Activated T-helper 1 cell treated with anti-CD3 and anti-CD28 coated beads, Interleukin-12 subunit alpha, Interleukin-12 subunit beta, Interleukin-2, Interleukin-4 antibody, amounts not matched to agents 30 ng/mL and 10 ng/mL and 1 ng/mL, durations not matched to agents 14 hours and 24 hours and 36 hours (primary cell): ENCODE measurements at regions of chr12 and their contacts with region 1.

Region 1: DNA sequence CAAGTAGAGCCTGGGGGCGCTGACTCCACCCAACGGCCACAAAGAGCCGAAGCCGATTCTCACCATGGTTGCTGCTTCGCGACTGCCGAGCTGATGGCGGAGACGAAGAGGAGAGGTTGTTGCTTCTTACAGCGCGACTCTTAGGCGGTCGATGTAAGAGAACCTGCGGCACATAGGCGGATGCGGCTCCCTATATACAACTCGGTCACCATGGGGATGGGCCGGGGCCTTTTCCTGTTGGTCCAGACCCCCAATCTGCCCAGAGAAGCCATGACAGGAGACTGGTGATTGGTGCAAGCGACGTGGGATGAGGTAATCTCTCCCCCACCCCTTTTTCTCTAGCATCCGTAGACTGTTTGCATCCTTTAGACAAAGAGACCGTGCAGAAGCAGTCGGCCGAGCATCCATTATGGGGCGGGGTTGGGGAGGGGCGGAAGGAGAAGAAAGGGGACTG is at the start of gene TUBA1A:
- DNase-seq: peak; percentile 94
- H3K4me3 Mint-ChIP-seq: peak within 1 kb of the TSS; percentile 90
- H3K27ac Mint-ChIP-seq: peak within 1 kb of the TSS; percentile 95
- H3K4me1 Mint-ChIP-seq: peaks cover 15% of the 10 kb centered on the region
- H3K27me3 Mint-ChIP-seq: peaks cover 2% of the 10 kb centered on the region
- total RNA-seq, gene TUBA1A: 46.7 and 47.2 TPM in 2 replicates

Region 2: DNA sequence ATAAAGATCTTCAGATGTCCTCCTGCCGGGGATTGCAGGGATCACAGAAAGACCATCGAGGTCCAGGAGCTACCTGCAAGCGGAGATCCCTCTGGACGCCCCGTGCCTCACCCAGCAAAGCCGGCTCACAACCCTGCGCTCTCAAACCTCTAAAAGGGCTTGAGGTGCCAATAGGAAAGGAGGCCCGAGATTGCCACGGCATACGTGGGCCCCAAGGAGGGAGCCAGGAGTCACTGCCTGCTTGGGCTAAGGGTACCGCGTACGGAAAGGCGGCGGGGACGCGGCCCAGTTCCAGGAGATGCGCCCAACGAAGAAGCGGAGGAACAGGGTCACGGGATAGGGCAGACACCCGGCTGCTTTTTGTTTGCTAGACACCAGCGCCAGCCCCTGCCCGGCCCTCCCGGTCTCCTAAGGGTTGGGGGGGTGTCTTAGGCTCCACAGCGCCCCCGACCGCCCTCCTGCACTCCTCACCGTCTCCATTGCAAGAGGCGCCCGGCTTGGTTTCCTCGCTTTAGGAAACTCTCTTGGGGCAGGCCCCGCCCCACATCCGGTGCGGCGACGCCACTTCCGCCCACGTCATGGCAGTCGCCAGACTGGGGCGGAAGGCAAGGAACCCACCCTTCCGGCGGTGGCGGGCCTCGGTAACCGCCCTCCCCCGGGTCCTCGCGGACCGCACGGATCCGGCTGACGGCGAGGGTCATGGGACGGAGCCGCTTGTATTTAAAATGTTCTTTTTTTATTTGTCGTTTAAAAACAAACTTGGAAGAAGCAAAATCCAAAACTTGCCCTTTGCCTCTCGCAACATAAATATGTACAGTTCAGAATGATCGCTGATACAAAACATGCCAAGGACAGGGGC is 170.5 kb before region 1 on chr12 and contains the start of gene PRKAG1:
- intact Hi-C with region 1: no loop called
- DNase-seq: peak; percentile 97
- H3K4me3 Mint-ChIP-seq: peak within 1 kb of the TSS; percentile 88
- H3K27ac Mint-ChIP-seq: peak within 1 kb of the TSS; percentile 95
- H3K4me1 Mint-ChIP-seq: peaks cover 53% of the 10 kb centered on the region
- H3K27me3 Mint-ChIP-seq: no peaks in the 10 kb centered on the region
- total RNA-seq, gene PRKAG1: 85.0 and 85.1 TPM in 2 replicates

Region 3: GRCh38 chr12:49060237-49061156 is 128.4 kb before region 1 on chr12 and contains the start of gene KMT2D:
- intact Hi-C with region 1: loop called (anchors 2 kb)
- DNase-seq: peak; percentile 83
- H3K4me3 Mint-ChIP-seq: peak within 1 kb of the TSS; percentile 95
- H3K27ac Mint-ChIP-seq: peak within 1 kb of the TSS; percentile 95
- H3K4me1 Mint-ChIP-seq: peaks cover 48% of the 10 kb centered on the region
- H3K27me3 Mint-ChIP-seq: no peaks in the 10 kb centered on the region
- total RNA-seq, gene KMT2D: 107 and 109 TPM in 2 replicates

Region 4: GRCh38 chr12:49110464-49111155 is 78.3 kb before region 1 on chr12 and contains the start of gene LMBR1L:
- intact Hi-C with region 1: loop called (anchors 1 kb)
- DNase-seq: peak; percentile 93
- H3K4me3 Mint-ChIP-seq: peak within 1 kb of the TSS; percentile 93
- H3K27ac Mint-ChIP-seq: peak within 1 kb of the TSS; percentile 92
- H3K4me1 Mint-ChIP-seq: peaks cover 37% of the 10 kb centered on the region
- H3K27me3 Mint-ChIP-seq: no peaks in the 10 kb centered on the region
- total RNA-seq, gene LMBR1L: 50.4 and 52.5 TPM in 2 replicates

Region 5: GRCh38 chr12:49232940-49233841 is 44.2 kb after region 1 on chr12:
- intact Hi-C with region 1: loop called (anchors 1 kb)
- DNase-seq: no peak
- H3K4me3 Mint-ChIP-seq: peak overlapping the region; percentile 67
- H3K27ac Mint-ChIP-seq: peak overlapping the region; percentile 73
- H3K4me1 Mint-ChIP-seq: peaks cover 9% of the 10 kb centered on the region
- H3K27me3 Mint-ChIP-seq: peaks cover 13% of the 10 kb centered on the region

Region 6: GRCh38 chr12:49322708-49323523 is 134.0 kb after region 1 on chr12 and contains the start of gene TROAP:
- intact Hi-C with region 1: loop called (anchors 1 kb)
- DNase-seq: peak; percentile 97
- H3K4me3 Mint-ChIP-seq: peak within 1 kb of the TSS; percentile 96
- H3K27ac Mint-ChIP-seq: peak within 1 kb of the TSS; percentile 94
- H3K4me1 Mint-ChIP-seq: peaks cover 28% of the 10 kb centered on the region
- H3K27me3 Mint-ChIP-seq: peaks cover 4% of the 10 kb centered on the region
- total RNA-seq, gene TROAP: 46.0 TPM in 2 replicates

Region 7: DNA sequence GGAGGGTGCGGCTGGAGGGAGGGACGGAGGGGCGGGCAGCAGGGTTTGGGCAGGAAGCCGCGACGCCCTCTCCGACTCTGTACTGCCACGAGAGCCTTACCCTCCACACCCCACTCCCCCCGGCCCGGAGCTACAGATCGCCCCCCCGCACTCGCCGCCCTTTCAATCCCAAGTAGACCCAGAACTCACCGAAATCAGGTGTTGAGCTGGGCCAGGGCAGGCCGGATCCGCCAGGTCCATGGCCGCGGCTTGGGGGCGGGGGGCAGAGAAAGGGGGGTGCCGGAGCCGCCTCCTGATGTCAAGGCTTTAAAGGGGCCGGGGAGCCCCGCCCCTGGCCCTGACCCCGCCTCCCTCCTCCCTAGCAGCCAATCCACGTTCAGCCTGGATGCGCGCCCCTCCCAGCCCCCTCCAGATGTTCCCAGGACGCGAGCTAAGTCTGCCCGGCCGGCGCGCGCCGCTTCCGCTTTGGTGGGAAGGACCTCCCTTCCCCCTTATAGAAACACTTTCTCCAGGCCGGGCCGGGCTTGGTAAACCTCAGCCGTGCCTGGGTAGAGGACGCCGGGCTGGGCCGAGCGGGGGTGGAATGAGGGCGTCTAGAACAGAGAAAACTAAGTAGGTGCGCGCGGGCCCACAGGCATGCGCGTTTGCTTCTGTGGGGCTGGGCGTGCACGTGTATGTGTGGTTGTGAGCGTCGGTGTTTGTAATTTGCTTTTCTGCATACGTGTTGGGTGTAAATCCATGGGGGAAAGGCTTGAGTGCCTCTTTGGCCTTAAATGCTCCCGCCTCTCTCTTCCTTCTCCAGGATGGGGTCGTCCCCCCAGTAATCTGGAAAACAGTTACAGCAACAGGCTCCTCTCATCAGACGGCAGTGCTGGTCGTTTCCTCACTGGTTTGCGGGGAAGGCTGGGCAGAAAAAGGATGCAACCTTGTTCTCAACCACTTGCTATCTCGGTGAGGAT is 639.5 kb after region 1 on chr12 and contains the start of gene NCKAP5L:
- intact Hi-C with region 1: loop called (anchors 2 kb)
- DNase-seq: peak; percentile 86
- H3K4me3 Mint-ChIP-seq: peak within 1 kb of the TSS; percentile 96
- H3K27ac Mint-ChIP-seq: peak within 1 kb of the TSS; percentile 91
- H3K4me1 Mint-ChIP-seq: peaks cover 28% of the 10 kb centered on the region
- H3K27me3 Mint-ChIP-seq: peaks cover 24% of the 10 kb centered on the region
- total RNA-seq, gene NCKAP5L: 3.8 TPM in 2 replicates